Activated CD4-positive, alpha-beta memory T cell treated with anti-CD3 and anti-CD28 coated beads, Interleukin-2, amount 10 ng/mL, durations not matched to agents 7 days and 5 days (primary cell): ENCODE measurements at regions of chr1 and their contacts with region 1.

Region 1: DNA sequence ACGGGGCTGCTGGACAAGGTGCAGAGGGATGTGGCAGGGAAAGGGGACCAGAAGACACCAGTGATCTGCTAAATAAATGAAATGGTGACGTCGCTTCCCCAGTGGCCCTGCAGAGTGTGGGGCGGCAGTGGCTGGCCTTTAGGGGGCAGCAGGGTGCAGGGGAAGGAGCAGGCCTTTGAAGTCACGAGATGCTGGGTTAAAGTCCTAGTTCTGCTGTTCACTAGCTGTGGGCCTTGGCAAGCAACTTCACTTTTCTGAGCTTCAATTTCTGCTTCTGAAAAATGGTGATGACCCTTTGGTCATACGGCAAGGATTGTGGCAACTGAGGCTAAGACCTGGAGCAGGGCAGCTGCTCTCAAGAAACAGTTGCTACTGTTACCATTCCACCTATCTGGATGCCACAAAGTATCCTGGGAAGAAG is 9.2 kb upstream of the GALE start:
- DNase-seq: peak; percentile 86
- H3K4me3 Mint-ChIP-seq: no peak overlapping the region
- H3K27ac Mint-ChIP-seq: peak overlapping the region; percentile 28
- H3K4me1 Mint-ChIP-seq: peaks cover 16% of the 10 kb centered on the region
- H3K27me3 Mint-ChIP-seq: no peaks in the 10 kb centered on the region

Region 2: DNA sequence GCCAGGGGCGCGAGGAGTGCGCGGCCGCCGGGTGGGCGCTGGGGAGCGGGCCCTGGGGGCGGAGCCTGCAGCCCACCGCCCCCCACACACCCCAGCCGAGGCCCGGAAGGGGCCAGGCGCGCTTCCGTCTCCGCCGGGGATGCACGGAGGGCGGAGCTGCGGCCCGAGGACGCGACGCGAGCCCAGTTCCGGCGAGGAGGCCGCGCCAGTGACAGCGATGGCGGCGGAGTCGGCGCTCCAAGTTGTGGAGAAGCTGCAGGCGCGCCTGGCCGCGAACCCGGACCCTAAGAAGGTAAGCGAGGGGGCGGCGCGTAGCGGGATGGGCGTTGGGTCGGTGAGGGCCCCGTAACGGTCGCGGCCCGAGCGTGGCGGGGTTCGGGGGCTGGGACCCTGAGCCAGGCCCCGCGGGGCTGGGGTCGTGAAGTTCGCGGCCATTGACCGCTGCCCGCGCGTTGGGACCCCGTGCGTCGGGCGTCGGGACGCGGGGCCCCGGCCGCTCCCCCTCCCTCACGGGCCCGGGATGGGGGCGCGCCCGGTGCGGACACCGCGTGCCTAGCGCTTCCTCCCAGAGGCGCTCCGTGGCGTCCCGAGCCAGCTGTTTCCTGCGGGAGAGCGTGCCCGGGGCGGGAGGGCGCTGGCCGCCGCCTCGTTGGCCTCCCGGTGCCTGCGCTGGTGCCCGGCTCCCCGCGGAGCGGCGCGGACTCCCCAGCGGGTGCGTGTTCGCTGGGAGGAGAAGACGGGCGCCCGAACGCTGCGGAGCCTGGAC is 66.3 kb before region 1 on chr1 and contains the start of gene ELOA:
- CTCF ChIA-PET with region 1: no interaction called
- POLR2A ChIA-PET with region 1: no interaction called
- DNase-seq: peak; percentile 84
- H3K4me3 Mint-ChIP-seq: peak within 1 kb of the TSS; percentile 87
- H3K27ac Mint-ChIP-seq: peak within 1 kb of the TSS; percentile 87
- H3K4me1 Mint-ChIP-seq: peaks cover 44% of the 10 kb centered on the region
- H3K27me3 Mint-ChIP-seq: no peaks in the 10 kb centered on the region
- total RNA-seq, gene ELOA: 34.1 to 35.2 TPM

Region 3: GRCh38 chr1:23772049-23772853 is 37.5 kb before region 1 on chr1:
- CTCF ChIA-PET with region 1: interaction called, 18 read pairs
- POLR2A ChIA-PET with region 1: interaction called, 4 read pairs
- DNase-seq: peak; percentile 88
- H3K4me3 Mint-ChIP-seq: no peak overlapping the region
- H3K27ac Mint-ChIP-seq: no peak overlapping the region
- H3K4me1 Mint-ChIP-seq: peaks cover 37% of the 10 kb centered on the region
- H3K27me3 Mint-ChIP-seq: no peaks in the 10 kb centered on the region

Region 4: GRCh38 chr1:23825076-23825761 is 15.5 kb after region 1 on chr1 and contains the start of gene HMGCL:
- CTCF ChIA-PET with region 1: interaction called, 65 read pairs
- POLR2A ChIA-PET with region 1: interaction called, 26 read pairs
- DNase-seq: peak; percentile 91
- H3K4me3 Mint-ChIP-seq: peak within 1 kb of the TSS; percentile 94
- H3K27ac Mint-ChIP-seq: peak within 1 kb of the TSS; percentile 87
- H3K4me1 Mint-ChIP-seq: peaks cover 25% of the 10 kb centered on the region
- H3K27me3 Mint-ChIP-seq: no peaks in the 10 kb centered on the region
- total RNA-seq, gene HMGCL: 33.5 to 35.7 TPM

Region 5: GRCh38 chr1:23854568-23854967 is 44.8 kb after region 1 on chr1:
- CTCF ChIA-PET with region 1: interaction called, 18 read pairs
- POLR2A ChIA-PET with region 1: no interaction called
- DNase-seq: no peak
- H3K4me3 Mint-ChIP-seq: no peak overlapping the region
- H3K27ac Mint-ChIP-seq: no peak overlapping the region
- H3K4me1 Mint-ChIP-seq: peaks cover 7% of the 10 kb centered on the region
- H3K27me3 Mint-ChIP-seq: no peaks in the 10 kb centered on the region

Region 6: GRCh38 chr1:23916209-23917131 is 106.7 kb after region 1 on chr1:
- CTCF ChIA-PET with region 1: interaction called, 31 read pairs
- POLR2A ChIA-PET with region 1: no interaction called
- DNase-seq: peak; percentile 54
- H3K4me3 Mint-ChIP-seq: no peak overlapping the region
- H3K27ac Mint-ChIP-seq: no peak overlapping the region
- H3K4me1 Mint-ChIP-seq: peaks cover 19% of the 10 kb centered on the region
- H3K27me3 Mint-ChIP-seq: peaks cover 3% of the 10 kb centered on the region